Aorta (tissue), 5 donors: ENCODE measurements at regions of chrX and their contacts with region 1.

Region 1: GRCh38 chrX:38327007-38327774 is at the start of gene RPGR:
- DNase-seq: peak; percentile 96 to 97
- ATAC-seq: peak; percentile 96
- H3K4me3 ChIP-seq: peak within 1 kb of the TSS in 1 of 2 donors; percentile 21
- H3K27ac ChIP-seq: peak within 1 kb of the TSS in 1 of 2 donors; percentile 65
- H3K4me1 ChIP-seq: no peaks in the 10 kb centered on the region
- H3K27me3 ChIP-seq: no peaks in the 10 kb centered on the region
- total RNA-seq, gene RPGR: 17.4 to 21.8 TPM

Region 2: GRCh38 chrX:37896511-37896890 is 430.7 kb before region 1 on chrX:
- intact Hi-C with region 1: no loop called
- DNase-seq: no peak
- ATAC-seq: no peak
- H3K4me3 ChIP-seq: no peak overlapping the region
- H3K27ac ChIP-seq: no peak overlapping the region
- H3K4me1 ChIP-seq: no peaks in the 10 kb centered on the region
- H3K27me3 ChIP-seq: no peaks in the 10 kb centered on the region

Region 3: GRCh38 chrX:37926700-37927099 is 400.5 kb before region 1 on chrX:
- intact Hi-C with region 1: loop called in 1 of 2 experiments (anchors 5 kb)
- DNase-seq: no peak
- ATAC-seq: no peak
- H3K4me3 ChIP-seq: no peak overlapping the region
- H3K27ac ChIP-seq: no peak overlapping the region
- H3K4me1 ChIP-seq: no peaks in the 10 kb centered on the region
- H3K27me3 ChIP-seq: no peaks in the 10 kb centered on the region

Region 4: GRCh38 chrX:38103857-38104812 is 223.1 kb before region 1 on chrX:
- intact Hi-C with region 1: no loop called
- DNase-seq: no peak
- ATAC-seq: no peak
- H3K4me3 ChIP-seq: no peak overlapping the region
- H3K27ac ChIP-seq: no peak overlapping the region
- H3K4me1 ChIP-seq: peaks cover 0 to 2% of the 10 kb centered on the region in 2 donors
- H3K27me3 ChIP-seq: no peaks in the 10 kb centered on the region

Region 5: GRCh38 chrX:38166478-38167083 is 160.6 kb before region 1 on chrX:
- intact Hi-C with region 1: no loop called
- DNase-seq: no peak
- ATAC-seq: no peak
- H3K4me3 ChIP-seq: no peak overlapping the region
- H3K27ac ChIP-seq: no peak overlapping the region
- H3K4me1 ChIP-seq: no peaks in the 10 kb centered on the region
- H3K27me3 ChIP-seq: no peaks in the 10 kb centered on the region

Region 6: DNA sequence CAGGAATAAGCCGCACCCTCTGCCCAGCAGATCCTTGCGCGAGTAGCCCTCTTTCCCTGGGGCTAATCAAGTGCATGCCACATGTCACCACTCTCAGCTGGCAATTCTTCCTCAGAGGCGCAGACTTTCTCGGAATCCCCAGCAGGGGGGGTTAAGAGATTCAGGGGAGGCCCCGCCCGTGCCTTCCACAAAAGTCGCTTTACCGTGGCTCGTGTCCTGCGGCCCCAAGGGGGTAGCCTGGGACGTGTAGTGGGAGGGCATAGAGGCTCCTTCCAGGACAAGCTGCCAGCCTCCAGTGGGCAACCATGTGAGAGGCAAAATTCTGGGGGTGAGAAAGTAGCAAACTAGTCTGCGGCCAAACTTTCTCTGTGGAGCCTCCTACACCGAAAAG is 107.2 kb before region 1 on chrX:
- intact Hi-C with region 1: loop called in 1 of 2 experiments (anchors 10 kb)
- DNase-seq: peak; percentile 60 to 75
- ATAC-seq: peak; percentile 72
- H3K4me3 ChIP-seq: peak overlapping the region; percentile 36 to 93
- H3K27ac ChIP-seq: no peak overlapping the region
- H3K4me1 ChIP-seq: no peaks in the 10 kb centered on the region
- H3K27me3 ChIP-seq: no peaks in the 10 kb centered on the region